ENCODE measurements at regions of chr1 and their contacts with region 1.

Region 1: DNA sequence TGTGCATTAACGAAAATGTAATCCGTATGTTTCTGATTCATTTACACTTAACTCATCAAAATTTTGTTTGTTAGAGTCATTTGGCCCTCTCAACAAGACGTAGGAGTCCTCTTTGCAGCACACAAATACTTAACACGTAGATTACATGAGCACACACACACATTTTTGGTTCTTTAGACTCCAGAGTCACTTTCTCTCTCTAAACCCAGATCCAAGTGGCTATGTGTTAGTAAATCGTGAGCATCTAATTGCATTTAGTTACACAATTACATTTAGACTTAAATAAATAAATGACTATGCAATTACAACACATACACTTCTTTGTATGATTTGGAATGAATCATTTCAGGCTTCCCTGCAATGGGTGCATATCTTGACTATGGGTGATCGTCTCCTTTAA is 109.0 kb upstream of the GREM2 start:
- DNase-seq: no peak
- H3K4me3 ChIP-seq: no peak overlapping the region
- H3K27me3 ChIP-seq: no peaks in the 10 kb centered on the region
- CTCF ChIP-seq: no peak

Region 2: DNA sequence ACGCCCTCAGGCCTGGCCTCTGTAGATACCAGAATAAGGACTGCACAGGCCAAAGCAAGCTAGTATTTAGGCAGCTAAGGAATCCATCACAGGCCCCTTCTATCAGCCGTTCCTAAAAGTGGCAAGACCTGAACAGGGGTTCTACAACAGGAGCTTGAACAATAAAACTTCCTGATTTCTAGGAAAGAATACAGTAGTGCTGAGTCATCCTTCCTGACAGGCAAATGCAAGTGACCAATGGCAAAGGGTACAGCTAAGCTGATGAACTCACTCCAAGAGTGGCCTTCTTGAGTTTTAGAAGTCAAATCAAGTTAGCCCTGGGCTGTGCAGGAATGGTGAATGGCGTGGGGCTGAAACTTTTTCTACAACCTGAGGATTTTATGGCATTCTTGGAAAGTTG is 222.0 kb before region 1 on chr1:
- CTCF ChIA-PET with region 1: no interaction called
- POLR2A ChIA-PET with region 1: interaction called, 13 read pairs
- DNase-seq: no peak
- H3K4me3 ChIP-seq: no peak overlapping the region
- H3K27me3 ChIP-seq: no peaks in the 10 kb centered on the region
- CTCF ChIP-seq: no peak

Region 3: DNA sequence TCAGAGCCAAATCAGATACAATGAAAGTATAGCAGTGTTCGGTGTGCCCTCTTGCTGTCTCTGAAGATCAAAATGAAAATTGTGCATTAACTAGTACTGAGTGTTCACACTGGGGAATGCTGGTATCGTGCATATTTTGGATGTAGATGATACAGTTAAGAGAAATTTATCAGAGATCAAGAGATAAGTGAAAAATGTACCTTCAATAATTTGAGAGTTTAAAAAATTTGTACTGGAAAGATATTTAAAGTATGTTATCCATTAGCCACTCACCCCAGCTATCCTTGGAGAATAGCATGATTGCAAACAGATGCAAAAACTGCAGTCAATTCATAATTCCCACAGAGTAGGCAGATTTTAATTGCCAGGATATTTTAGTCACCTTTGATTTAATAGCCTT is 165.5 kb before region 1 on chr1:
- CTCF ChIA-PET with region 1: no interaction called
- POLR2A ChIA-PET with region 1: no interaction called
- DNase-seq: no peak
- H3K4me3 ChIP-seq: no peak overlapping the region
- H3K27me3 ChIP-seq: no peaks in the 10 kb centered on the region
- CTCF ChIP-seq: no peak

Region 4: GRCh38 chr1:240575981-240576662 is 144.9 kb before region 1 on chr1:
- CTCF ChIA-PET with region 1: no interaction called
- POLR2A ChIA-PET with region 1: no interaction called
- DNase-seq: no peak
- H3K4me3 ChIP-seq: no peak overlapping the region
- H3K27me3 ChIP-seq: no peaks in the 10 kb centered on the region
- CTCF ChIP-seq: no peak